ENCODE measurements at regions of chr12 and their contacts with region 1.

Region 1: GRCh38 chr12:68807576-68808387 is at the start of gene MDM2:
- DNase-seq: peak; percentile 96
- CTCF ChIP-seq: peak; percentile 77

Region 2: GRCh38 chr12:68675101-68675842 is 132.5 kb before region 1 on chr12:
- CTCF ChIA-PET with region 1: no interaction called
- POLR2A ChIA-PET with region 1: no interaction called
- DNase-seq: no peak
- CTCF ChIP-seq: no peak

Region 3: GRCh38 chr12:68686595-68687521 is 120.9 kb before region 1 on chr12 and contains the start of gene NUP107:
- CTCF ChIA-PET with region 1: no interaction called
- POLR2A ChIA-PET with region 1: interaction called, 11 read pairs
- DNase-seq: peak; percentile 96
- CTCF ChIP-seq: no peak

Region 4: GRCh38 chr12:68745904-68746571 is 61.7 kb before region 1 on chr12 and contains the start of gene SLC35E3:
- CTCF ChIA-PET with region 1: interaction called, 3 read pairs
- POLR2A ChIA-PET with region 1: interaction called, 19 read pairs
- DNase-seq: peak; percentile 98
- CTCF ChIP-seq: no peak

Region 5: DNA sequence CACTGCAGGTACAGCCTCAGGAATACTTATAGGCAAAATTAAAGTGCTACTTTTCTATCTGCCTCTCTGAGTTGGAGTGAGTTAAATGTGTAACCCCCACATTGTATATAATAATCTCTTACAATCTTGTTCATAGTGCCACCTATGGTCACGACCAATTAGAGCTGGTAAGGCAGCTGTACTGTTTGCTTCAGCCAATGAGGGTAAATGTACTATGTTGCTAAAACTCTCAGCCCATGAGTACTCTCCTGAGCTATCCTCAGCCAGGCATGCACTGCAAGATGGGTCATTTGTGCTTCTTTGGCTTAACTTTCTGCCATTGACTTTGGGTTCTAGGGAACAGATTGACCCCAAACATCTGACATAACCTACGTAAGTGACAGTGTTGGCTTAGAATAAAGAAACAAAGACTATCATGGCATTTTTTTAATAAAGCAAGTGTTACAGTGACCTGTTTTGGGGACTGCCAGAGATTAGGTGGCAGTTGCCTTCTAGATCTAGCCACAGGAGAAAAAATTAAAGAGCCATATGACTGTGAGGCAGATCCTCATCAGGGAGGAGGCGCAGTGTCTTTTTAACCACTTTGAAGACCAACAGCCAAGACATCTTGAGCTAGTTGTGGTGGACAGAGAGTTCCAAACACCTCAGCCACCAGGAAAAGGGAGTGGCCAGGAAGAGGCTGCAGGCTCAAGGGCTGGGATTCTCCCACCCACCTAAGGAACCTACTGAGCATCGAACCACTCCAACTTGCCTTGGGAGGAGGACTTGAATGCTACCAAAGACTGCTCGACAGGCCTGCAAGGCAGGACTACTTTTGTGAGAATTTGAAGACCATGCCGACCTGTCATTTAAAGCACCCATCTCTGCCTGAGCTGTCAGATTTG is 14.6 kb before region 1 on chr12:
- CTCF ChIA-PET with region 1: interaction called, 26 read pairs
- POLR2A ChIA-PET with region 1: interaction called, 4 read pairs
- DNase-seq: peak; percentile 70
- CTCF ChIP-seq: no peak

Region 6: GRCh38 chr12:68831272-68831671 is 23.5 kb after region 1 on chr12:
- CTCF ChIA-PET with region 1: interaction called, 21 read pairs
- POLR2A ChIA-PET with region 1: interaction called, 4 read pairs
- DNase-seq: no peak
- CTCF ChIP-seq: no peak

Region 7: DNA sequence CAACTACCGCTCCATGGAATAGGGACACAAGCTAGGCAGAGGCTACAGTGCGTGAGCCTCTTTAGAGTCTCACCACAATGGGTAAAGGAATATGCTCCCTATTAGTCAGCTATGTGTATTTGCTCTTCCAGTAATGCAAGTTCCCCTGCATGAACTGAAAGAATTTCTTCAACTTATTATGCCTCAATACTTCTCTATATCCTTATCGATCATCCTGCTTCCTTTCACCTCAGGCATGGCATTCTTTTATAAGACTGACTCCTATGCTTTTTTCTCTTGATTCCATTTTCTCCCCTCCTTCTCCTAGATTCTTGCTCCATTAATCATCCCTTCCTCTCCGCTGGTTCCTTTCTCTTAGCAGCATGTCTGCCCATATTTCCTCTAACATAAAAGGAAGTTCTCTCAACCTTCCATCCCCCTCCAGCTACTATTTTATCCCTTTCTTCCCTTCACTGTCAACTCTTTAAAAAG is 219.7 kb after region 1 on chr12:
- CTCF ChIA-PET with region 1: no interaction called
- POLR2A ChIA-PET with region 1: no interaction called
- DNase-seq: no peak
- CTCF ChIP-seq: no peak